CD8-positive, alpha-beta memory T cell (primary cell): ENCODE measurements at regions of chr18 and their contacts with region 1.

Region 1: DNA sequence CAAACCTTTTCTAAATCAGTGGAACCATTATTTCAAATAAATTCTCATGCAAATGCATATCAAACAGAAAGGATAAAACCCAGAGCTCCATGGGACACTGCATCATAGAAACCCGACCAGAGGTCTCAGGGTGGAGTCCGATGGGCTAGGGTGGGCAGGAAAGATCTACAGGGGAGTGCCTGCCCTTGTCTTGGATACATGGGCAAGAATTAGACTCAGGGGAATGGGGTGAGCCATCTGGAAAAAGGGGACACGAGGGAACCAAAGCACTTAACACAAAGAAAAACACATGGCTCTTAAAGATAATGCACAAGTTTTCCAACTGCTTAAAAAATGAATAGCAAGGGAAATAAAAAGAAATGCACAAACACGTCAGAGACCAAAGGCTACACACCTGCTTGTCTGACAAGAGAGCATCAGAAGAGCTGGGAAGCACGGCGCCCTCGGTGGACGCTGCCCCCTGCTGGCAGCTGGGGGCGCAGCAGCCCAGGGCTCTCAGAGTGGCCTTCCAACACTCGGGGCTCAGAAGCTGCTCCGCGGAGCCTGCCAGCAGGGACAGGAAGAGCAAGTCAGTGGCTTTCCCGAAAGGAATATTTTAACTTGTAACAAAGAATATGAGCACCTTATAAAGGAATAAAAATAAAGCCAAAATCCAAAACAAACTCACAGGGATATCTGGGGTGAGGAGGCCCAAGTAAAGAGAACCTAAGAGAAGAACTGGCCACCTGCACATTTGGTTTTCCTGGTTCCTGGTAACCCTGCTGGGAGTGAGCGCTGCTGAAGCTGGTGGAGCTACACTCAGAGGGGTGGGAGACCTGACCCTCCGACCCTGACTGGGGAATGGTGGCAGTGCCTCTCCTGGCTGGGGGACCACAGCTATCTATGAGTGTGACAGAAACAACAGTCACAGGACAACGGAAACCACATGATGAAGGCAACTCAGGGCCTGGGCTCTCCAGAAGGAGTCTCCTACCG is 54.5 kb downstream of the SIGLEC15 start:
- DNase-seq: peak; percentile 53 to 74 (median 57)
- H3K4me3 ChIP-seq: no peak overlapping the region
- H3K4me3 Mint-ChIP-seq: peak overlapping the region in 1 of 7 donors; percentile 0
- H3K27ac ChIP-seq: no peak overlapping the region
- H3K27ac Mint-ChIP-seq: peak overlapping the region in 6 of 8 donors; percentile 4 to 76 (median 46)
- H3K4me1 ChIP-seq: peaks cover 6% of the 10 kb centered on the region
- H3K4me1 Mint-ChIP-seq: peaks cover 12 to 19% (median 15%) of the 10 kb centered on the region in 3 donors
- H3K27me3 ChIP-seq: no peaks in the 10 kb centered on the region
- H3K27me3 Mint-ChIP-seq: no peaks in the 10 kb centered on the region

Region 2: DNA sequence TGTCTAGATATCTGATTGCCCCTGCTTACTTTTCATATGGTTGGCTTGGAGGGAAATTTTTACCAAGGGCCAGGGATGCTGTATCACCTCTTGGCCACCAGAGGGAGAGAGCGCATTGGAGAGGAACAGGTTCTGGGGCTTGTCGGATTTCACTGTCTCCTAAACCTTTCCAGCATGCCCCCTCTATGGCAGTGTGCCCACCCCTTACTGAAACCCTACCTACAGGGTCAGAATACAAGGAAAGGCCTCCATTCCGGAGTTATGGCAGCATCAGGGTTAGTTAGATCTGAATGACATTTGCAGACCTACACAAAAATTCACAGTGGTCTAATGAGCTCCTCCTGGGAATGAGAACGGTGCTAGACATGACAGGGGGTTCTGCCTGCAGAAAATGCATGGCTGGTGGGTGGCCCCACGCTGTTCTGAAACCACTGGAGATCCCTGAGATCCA is 258.9 kb before region 1 on chr18:
- CTCF ChIA-PET with region 1: interaction called, 10 read pairs
- POLR2A ChIA-PET with region 1: no interaction called
- DNase-seq: peak; percentile 5 to 52 (median 22)
- H3K4me3 ChIP-seq: no peak overlapping the region
- H3K4me3 Mint-ChIP-seq: no peak overlapping the region
- H3K27ac ChIP-seq: no peak overlapping the region
- H3K27ac Mint-ChIP-seq: no peak overlapping the region
- H3K4me1 ChIP-seq: no peaks in the 10 kb centered on the region
- H3K4me1 Mint-ChIP-seq: no peaks in the 10 kb centered on the region
- H3K27me3 ChIP-seq: no peaks in the 10 kb centered on the region
- H3K27me3 Mint-ChIP-seq: peaks cover 7 to 32% of the 10 kb centered on the region in 2 donors

Region 3: DNA sequence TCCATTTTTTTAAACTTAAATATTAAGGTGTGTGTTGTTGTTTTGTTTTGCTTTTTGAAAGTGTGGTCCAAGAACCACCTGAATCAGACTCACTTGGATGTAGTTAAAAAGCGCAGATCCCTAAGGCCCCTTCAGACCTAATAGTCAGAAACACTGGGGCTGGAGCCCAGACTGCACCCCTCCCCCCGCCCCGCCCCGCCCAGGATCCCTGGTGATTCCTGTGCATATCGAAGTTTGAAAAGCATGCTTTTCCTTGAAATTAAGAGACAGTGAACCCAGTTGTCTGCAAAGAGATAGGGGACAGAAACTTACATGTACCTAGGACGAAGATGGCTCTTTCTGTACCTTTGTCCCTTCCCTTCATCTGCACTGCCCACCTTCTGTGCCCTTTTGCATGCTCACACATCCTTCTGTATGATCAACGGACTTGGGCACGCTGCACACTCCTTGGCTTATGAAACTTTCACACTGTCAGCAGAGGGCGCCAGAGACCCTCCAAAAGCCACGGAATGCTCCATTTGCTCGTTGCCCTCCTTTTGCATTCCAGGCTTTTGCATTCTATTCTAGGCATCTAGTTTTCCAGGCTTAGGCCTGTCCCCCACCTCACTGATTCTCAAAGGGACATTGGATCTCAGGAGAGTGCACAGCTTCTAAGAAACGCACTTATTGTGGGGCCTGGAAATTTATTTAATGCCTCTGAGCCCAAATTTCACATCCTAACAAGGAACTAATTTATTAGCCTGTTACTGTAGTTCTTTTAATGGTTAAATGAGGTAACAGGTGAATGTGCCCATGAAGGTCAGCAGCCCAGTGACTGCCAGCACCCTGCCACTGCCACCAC is 188.8 kb before region 1 on chr18:
- CTCF ChIA-PET with region 1: interaction called, 24 read pairs
- POLR2A ChIA-PET with region 1: no interaction called
- DNase-seq: peak; percentile 63 to 81 (median 66)
- H3K4me3 ChIP-seq: no peak overlapping the region
- H3K4me3 Mint-ChIP-seq: peak overlapping the region in 6 of 7 donors; percentile 14 to 75 (median 48)
- H3K27ac ChIP-seq: no peak overlapping the region
- H3K27ac Mint-ChIP-seq: peak overlapping the region in 4 of 8 donors; percentile 57 to 89 (median 69)
- H3K4me1 ChIP-seq: peaks cover 47% of the 10 kb centered on the region
- H3K4me1 Mint-ChIP-seq: peaks cover 38 to 50% (median 49%) of the 10 kb centered on the region in 3 donors
- H3K27me3 ChIP-seq: no peaks in the 10 kb centered on the region
- H3K27me3 Mint-ChIP-seq: no peaks in the 10 kb centered on the region

Region 4: GRCh38 chr18:46073474-46074331 is 193.7 kb after region 1 on chr18:
- CTCF ChIA-PET with region 1: interaction called, 14 read pairs
- POLR2A ChIA-PET with region 1: no interaction called
- DNase-seq: peak in 4 of 5 donors; percentile 31 to 65 (median 56)
- H3K4me3 ChIP-seq: no peak overlapping the region
- H3K4me3 Mint-ChIP-seq: peak overlapping the region in 5 of 7 donors; percentile 26 to 80 (median 55)
- H3K27ac ChIP-seq: no peak overlapping the region
- H3K27ac Mint-ChIP-seq: peak overlapping the region in 2 of 8 donors; percentile 44 to 77
- H3K4me1 ChIP-seq: peaks cover 45% of the 10 kb centered on the region
- H3K4me1 Mint-ChIP-seq: peaks cover 35 to 40% (median 35%) of the 10 kb centered on the region in 3 donors
- H3K27me3 ChIP-seq: no peaks in the 10 kb centered on the region
- H3K27me3 Mint-ChIP-seq: peaks cover 0 to 1% of the 10 kb centered on the region in 2 donors